Activated B cell treated with CpG ODN at 0.5 μM for 24 hours (primary cell): ENCODE measurements at regions of chr16 and their contacts with region 1.

Region 1: DNA sequence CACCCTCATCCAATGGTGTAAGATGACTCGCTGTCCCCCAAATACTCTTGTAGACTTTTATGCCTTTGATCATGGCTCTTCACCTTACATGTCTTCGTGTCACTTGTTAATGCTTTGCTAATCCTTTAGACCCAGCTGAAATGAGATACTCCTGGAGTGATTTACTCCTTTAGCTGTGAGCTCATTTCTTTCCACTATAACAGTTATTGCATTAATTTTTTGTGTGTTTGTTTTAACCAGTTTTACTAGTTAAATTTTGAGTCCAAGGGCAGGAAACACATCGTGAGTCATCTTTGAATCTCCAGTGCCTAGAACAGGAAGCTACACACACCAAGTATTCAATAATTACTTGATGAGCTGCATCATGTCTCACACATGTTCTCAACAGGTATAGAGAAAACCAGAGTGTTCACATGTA is 6.5 kb upstream of the CTCF start:
- DNase-seq: no peak
- ATAC-seq: peak; percentile 79
- H3K4me3 Mint-ChIP-seq: peak overlapping the region; percentile 70
- H3K27ac Mint-ChIP-seq: peak overlapping the region; percentile 90
- H3K4me1 Mint-ChIP-seq: peaks cover 76% of the 10 kb centered on the region
- H3K27me3 Mint-ChIP-seq: no peaks in the 10 kb centered on the region
- CTCF ChIP-seq: no peak

Region 2: GRCh38 chr16:67530013-67530939 is 25.5 kb before region 1 on chr16:
- CTCF ChIA-PET with region 1: interaction called, 3 read pairs
- POLR2A ChIA-PET with region 1: interaction called, 54 read pairs
- intact Hi-C with region 1: no loop called
- DNase-seq: peak; percentile 81
- ATAC-seq: peak; percentile 65
- H3K4me3 Mint-ChIP-seq: peak overlapping the region; percentile 90
- H3K27ac Mint-ChIP-seq: peak overlapping the region; percentile 95
- H3K4me1 Mint-ChIP-seq: peaks cover 61% of the 10 kb centered on the region
- H3K27me3 Mint-ChIP-seq: no peaks in the 10 kb centered on the region
- CTCF ChIP-seq: no peak

Region 3: DNA sequence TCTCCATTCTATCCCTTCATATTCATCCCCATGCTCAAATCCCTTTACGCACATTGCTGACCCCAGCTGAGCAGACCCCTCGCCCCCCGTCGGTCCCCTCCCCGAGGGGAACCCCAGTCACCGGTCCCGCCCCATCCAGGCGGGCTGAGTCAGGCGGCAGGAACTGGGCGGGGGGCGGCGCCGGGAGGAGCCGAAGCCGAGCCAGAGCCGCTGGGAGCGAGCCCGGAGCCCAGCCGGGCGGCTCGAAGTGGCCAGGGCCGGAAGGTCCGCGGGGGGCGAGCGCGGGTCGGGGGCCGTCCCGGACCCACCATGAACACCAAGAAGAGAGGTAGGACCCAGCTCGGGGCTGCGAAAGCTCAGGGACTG is 18.6 kb before region 1 on chr16:
- CTCF ChIA-PET with region 1: interaction called, 4 read pairs
- POLR2A ChIA-PET with region 1: interaction called, 54 read pairs
- intact Hi-C with region 1: no loop called
- DNase-seq: no peak
- ATAC-seq: peak; percentile 47
- H3K4me3 Mint-ChIP-seq: peak overlapping the region; percentile 90
- H3K27ac Mint-ChIP-seq: peak overlapping the region; percentile 93
- H3K4me1 Mint-ChIP-seq: peaks cover 82% of the 10 kb centered on the region
- H3K27me3 Mint-ChIP-seq: no peaks in the 10 kb centered on the region
- CTCF ChIP-seq: no peak

Region 4: GRCh38 chr16:67660564-67661028 is 104.8 kb after region 1 on chr16 and contains the start of gene PARD6A:
- CTCF ChIA-PET with region 1: no interaction called
- POLR2A ChIA-PET with region 1: interaction called, 11 read pairs
- intact Hi-C with region 1: no loop called
- DNase-seq: peak; percentile 87
- ATAC-seq: peak; percentile 80
- H3K4me3 Mint-ChIP-seq: peak within 1 kb of the TSS; percentile 94
- H3K27ac Mint-ChIP-seq: peak within 1 kb of the TSS; percentile 94
- H3K4me1 Mint-ChIP-seq: peaks cover 28% of the 10 kb centered on the region
- H3K27me3 Mint-ChIP-seq: no peaks in the 10 kb centered on the region
- CTCF ChIP-seq: no peak
- total RNA-seq, gene PARD6A: 5.9 and 6.0 TPM in 2 replicates

Region 5: GRCh38 chr16:68202091-68202519 is 646.3 kb after region 1 on chr16:
- CTCF ChIA-PET with region 1: no interaction called
- POLR2A ChIA-PET with region 1: no interaction called
- intact Hi-C with region 1: no loop called
- DNase-seq: no peak
- ATAC-seq: no peak
- H3K4me3 Mint-ChIP-seq: no peak overlapping the region
- H3K27ac Mint-ChIP-seq: peak overlapping the region; percentile 24
- H3K4me1 Mint-ChIP-seq: peaks cover 8% of the 10 kb centered on the region
- H3K27me3 Mint-ChIP-seq: no peaks in the 10 kb centered on the region
- CTCF ChIP-seq: no peak